Cardiac septum (tissue), 1 donor: ENCODE measurements at regions of chr6 and their contacts with region 1.

Region 1: GRCh38 chr6:2196079-2196679 is 49.2 kb downstream of the GMDS start:
- DNase-seq: no peak

Region 2: GRCh38 chr6:1809291-1809988 is 386.7 kb before region 1 on chr6:
- intact Hi-C with region 1: no loop called
- DNase-seq: no peak

Region 3: GRCh38 chr6:2061880-2062279 is 134.3 kb before region 1 on chr6:
- intact Hi-C with region 1: no loop called
- DNase-seq: no peak

Region 4: GRCh38 chr6:2111162-2111677 is 85.0 kb before region 1 on chr6:
- intact Hi-C with region 1: loop called (anchors 5 kb)
- DNase-seq: no peak

Region 5: GRCh38 chr6:2327591-2327990 is 131.4 kb after region 1 on chr6:
- intact Hi-C with region 1: no loop called
- DNase-seq: no peak

Region 6: GRCh38 chr6:2353412-2354137 is 157.4 kb after region 1 on chr6:
- intact Hi-C with region 1: loop called (anchors 10 kb)
- DNase-seq: peak; percentile 80